ENCODE measurements at regions of chr7 and their contacts with region 1.

Region 1: GRCh38 chr7:131107337-131108211 is 220.1 kb upstream of the MKLN1 start:
- DNase-seq: peak; percentile 69
- ATAC-seq: peak; percentile 45
- H3K4me3 Mint-ChIP-seq: peak overlapping the region; percentile 99
- H3K27ac Mint-ChIP-seq: peak overlapping the region; percentile 99
- H3K4me1 Mint-ChIP-seq: peaks cover 75% of the 10 kb centered on the region
- H3K27me3 Mint-ChIP-seq: no peaks in the 10 kb centered on the region
- CTCF ChIP-seq: no peak

Region 2: GRCh38 chr7:130961128-130961601 is 146.4 kb before region 1 on chr7:
- CTCF ChIA-PET with region 1: no interaction called
- POLR2A ChIA-PET with region 1: interaction called, 11 read pairs
- intact Hi-C with region 1: loop called (anchors 1 kb)
- DNase-seq: peak; percentile 54
- ATAC-seq: peak; percentile 78
- H3K4me3 Mint-ChIP-seq: peak overlapping the region; percentile 87
- H3K27ac Mint-ChIP-seq: peak overlapping the region; percentile 98
- H3K4me1 Mint-ChIP-seq: peaks cover 69% of the 10 kb centered on the region
- H3K27me3 Mint-ChIP-seq: no peaks in the 10 kb centered on the region
- CTCF ChIP-seq: no peak

Region 3: GRCh38 chr7:131071786-131072504 is 35.6 kb before region 1 on chr7:
- CTCF ChIA-PET with region 1: interaction called, 7 read pairs
- POLR2A ChIA-PET with region 1: interaction called, 13 read pairs
- intact Hi-C with region 1: loop called (anchors 1 kb)
- DNase-seq: no peak
- ATAC-seq: no peak
- H3K4me3 Mint-ChIP-seq: no peak overlapping the region
- H3K27ac Mint-ChIP-seq: peak overlapping the region; percentile 73
- H3K4me1 Mint-ChIP-seq: peaks cover 82% of the 10 kb centered on the region
- H3K27me3 Mint-ChIP-seq: no peaks in the 10 kb centered on the region
- CTCF ChIP-seq: no peak

Region 4: DNA sequence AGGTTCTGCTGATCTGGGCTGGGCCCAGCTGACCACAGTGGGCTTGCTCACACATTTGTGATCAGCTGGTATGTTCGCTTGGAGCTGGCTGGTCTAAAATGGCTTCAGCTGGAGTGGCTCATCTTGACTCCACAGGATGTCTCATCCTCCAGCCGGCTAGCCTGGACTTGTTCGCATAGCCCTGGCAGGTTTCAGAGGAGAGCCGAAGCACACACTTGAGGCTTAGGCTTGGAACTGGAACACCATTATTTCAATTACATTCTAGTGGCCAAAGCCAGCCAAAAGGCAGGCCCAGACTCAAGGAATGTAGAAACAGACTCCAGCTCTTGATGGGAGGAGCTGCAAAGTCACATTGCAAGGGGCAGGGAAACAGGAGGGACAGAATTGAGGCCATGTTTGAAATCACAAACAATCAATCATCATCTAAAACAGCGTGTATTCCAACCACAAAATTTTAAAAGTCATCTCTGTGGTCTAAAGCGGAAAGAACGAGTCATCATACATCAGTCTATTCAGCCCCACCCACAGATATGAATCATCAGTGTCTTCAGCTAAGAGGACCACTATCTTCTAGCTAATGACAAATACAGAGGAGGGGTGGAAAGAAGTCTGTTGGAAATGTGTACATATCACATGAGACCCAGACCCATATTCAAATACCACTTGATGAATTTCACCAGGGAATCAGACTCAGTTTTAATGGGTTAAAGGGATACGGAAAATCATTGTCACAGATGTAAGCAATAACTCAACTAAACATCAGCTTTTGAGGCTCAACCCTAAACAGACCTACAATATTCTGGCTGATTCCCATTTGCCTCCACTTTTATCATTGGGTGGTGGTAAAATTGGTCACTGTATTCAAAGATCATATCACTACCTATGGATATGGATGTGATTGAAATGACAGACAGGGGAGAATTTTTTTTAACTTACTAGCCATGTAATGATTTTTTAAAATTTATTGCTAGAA is 81.1 kb after region 1 on chr7:
- CTCF ChIA-PET with region 1: no interaction called
- POLR2A ChIA-PET with region 1: interaction called, 4 read pairs
- intact Hi-C with region 1: loop called (anchors 2 kb)
- DNase-seq: no peak
- ATAC-seq: peak; percentile 87
- H3K4me3 Mint-ChIP-seq: no peak overlapping the region
- H3K27ac Mint-ChIP-seq: peak overlapping the region; percentile 66
- H3K4me1 Mint-ChIP-seq: peaks cover 12% of the 10 kb centered on the region
- H3K27me3 Mint-ChIP-seq: peaks cover 2% of the 10 kb centered on the region
- CTCF ChIP-seq: no peak

Region 5: GRCh38 chr7:131327626-131328376 is 220.2 kb after region 1 on chr7 and contains the start of gene MKLN1:
- CTCF ChIA-PET with region 1: interaction called, 3 read pairs
- POLR2A ChIA-PET with region 1: interaction called, 32 read pairs
- intact Hi-C with region 1: loop called (anchors 1 kb)
- DNase-seq: peak; percentile 85
- ATAC-seq: peak; percentile 96
- H3K4me3 Mint-ChIP-seq: peak within 1 kb of the TSS; percentile 98
- H3K27ac Mint-ChIP-seq: peak within 1 kb of the TSS; percentile 95
- H3K4me1 Mint-ChIP-seq: peaks cover 57% of the 10 kb centered on the region
- H3K27me3 Mint-ChIP-seq: no peaks in the 10 kb centered on the region
- CTCF ChIP-seq: no peak
- total RNA-seq, gene MKLN1: 48.9 and 64.6 TPM in 2 replicates

Region 6: GRCh38 chr7:131355921-131356777 is 248.6 kb after region 1 on chr7:
- CTCF ChIA-PET with region 1: no interaction called
- POLR2A ChIA-PET with region 1: no interaction called
- intact Hi-C with region 1: no loop called
- DNase-seq: no peak
- ATAC-seq: no peak
- H3K4me3 Mint-ChIP-seq: no peak overlapping the region
- H3K27ac Mint-ChIP-seq: no peak overlapping the region
- H3K4me1 Mint-ChIP-seq: peaks cover 76% of the 10 kb centered on the region
- H3K27me3 Mint-ChIP-seq: no peaks in the 10 kb centered on the region
- CTCF ChIP-seq: no peak

Measured in activated B cell treated with CpG ODN at 0.5 μM for 24 hours (primary cell).